Activated CD4-positive, alpha-beta T cell treated with anti-CD3 and anti-CD28 coated beads for 36 hours (primary cell): ENCODE measurements at regions of chr4 and their contacts with region 1.

Region 1: GRCh38 chr4:169757575-169758184 is at the start of gene HPF1:
- DNase-seq: peak; percentile 97
- ATAC-seq: peak; percentile 94
- H3K4me3 Mint-ChIP-seq: peak within 1 kb of the TSS; percentile 82
- H3K27ac Mint-ChIP-seq: peak within 1 kb of the TSS; percentile 68
- H3K4me1 Mint-ChIP-seq: peaks cover 15% of the 10 kb centered on the region
- H3K27me3 Mint-ChIP-seq: peaks cover under 1% of the 10 kb centered on the region
- total RNA-seq, gene HPF1: 29.8 to 34.7 TPM

Region 2: GRCh38 chr4:168318266-168318895 is 1439.3 kb before region 1 on chr4 and contains the start of gene DDX60:
- CTCF ChIA-PET with region 1: no interaction called
- POLR2A ChIA-PET with region 1: no interaction called
- intact Hi-C with region 1: loop called in 1 of 2 experiments (anchors 10 kb)
- DNase-seq: peak; percentile 91
- ATAC-seq: peak; percentile 93
- H3K4me3 Mint-ChIP-seq: peak within 1 kb of the TSS; percentile 85
- H3K27ac Mint-ChIP-seq: peak within 1 kb of the TSS; percentile 92
- H3K4me1 Mint-ChIP-seq: peaks cover 44% of the 10 kb centered on the region
- H3K27me3 Mint-ChIP-seq: no peaks in the 10 kb centered on the region
- total RNA-seq, gene DDX60: 22.2 to 23.8 TPM

Region 3: GRCh38 chr4:169619959-169620879 is 137.5 kb before region 1 on chr4 and contains the start of gene CLCN3:
- CTCF ChIA-PET with region 1: no interaction called
- POLR2A ChIA-PET with region 1: interaction called, 3 read pairs
- intact Hi-C with region 1: loop called in 1 of 2 experiments (anchors 1 kb)
- DNase-seq: peak; percentile 93
- ATAC-seq: peak; percentile 72
- H3K4me3 Mint-ChIP-seq: peak within 1 kb of the TSS; percentile 93
- H3K27ac Mint-ChIP-seq: peak within 1 kb of the TSS; percentile 100
- H3K4me1 Mint-ChIP-seq: peaks cover 56% of the 10 kb centered on the region
- H3K27me3 Mint-ChIP-seq: no peaks in the 10 kb centered on the region
- total RNA-seq, gene CLCN3: 21.2 to 22.0 TPM

Region 4: DNA sequence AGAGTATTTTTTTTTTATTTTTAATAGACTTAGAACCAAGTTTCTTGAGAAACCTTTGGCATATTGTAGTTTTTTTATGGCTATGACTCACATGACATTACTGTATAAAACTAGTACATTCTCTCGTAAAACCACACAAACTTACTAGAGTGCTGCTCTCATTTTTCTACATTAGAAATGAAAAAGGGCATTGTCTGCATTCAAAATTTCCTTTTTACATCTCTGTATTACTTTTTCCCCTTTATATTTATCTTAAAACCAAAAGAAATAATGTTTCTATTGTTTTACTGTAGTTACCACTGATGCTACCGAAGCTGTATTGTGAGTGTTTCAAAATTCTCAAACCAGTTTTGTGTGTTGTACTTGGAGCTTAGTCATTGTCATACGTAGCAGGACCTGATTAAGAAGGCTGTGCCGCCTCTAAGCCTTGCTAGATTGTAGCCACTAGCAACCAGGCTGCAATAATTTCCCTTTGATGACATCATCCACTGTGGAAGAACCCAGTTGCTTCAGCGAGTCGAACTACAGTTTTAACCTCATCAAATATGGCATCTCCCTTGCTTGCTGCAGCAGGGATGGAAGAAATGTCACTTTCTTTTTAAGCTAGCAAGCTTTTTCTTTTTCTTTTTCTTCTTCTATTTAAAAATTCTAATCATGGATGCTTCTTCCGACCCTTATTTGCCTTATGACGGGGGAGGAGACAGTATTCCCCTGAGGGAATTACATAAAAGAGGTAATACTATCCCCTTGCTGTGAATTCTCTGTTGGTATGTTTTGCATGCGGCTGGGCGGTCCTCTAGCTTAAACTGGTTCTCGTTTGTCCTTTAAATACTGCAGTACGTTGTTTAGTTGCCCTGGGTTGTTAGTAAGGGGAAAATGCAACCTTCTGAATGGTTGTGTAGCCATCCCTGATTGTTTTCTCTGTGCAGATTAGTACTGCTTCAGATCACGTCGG is 97.7 kb before region 1 on chr4:
- CTCF ChIA-PET with region 1: no interaction called
- POLR2A ChIA-PET with region 1: no interaction called
- intact Hi-C with region 1: loop called (anchors 1 kb)
- DNase-seq: peak; percentile 83
- ATAC-seq: peak; percentile 99
- H3K4me3 Mint-ChIP-seq: peak overlapping the region; percentile 80
- H3K27ac Mint-ChIP-seq: peak overlapping the region; percentile 98
- H3K4me1 Mint-ChIP-seq: peaks cover 37% of the 10 kb centered on the region
- H3K27me3 Mint-ChIP-seq: no peaks in the 10 kb centered on the region

Region 5: GRCh38 chr4:170027181-170027829 is 269.6 kb after region 1 on chr4:
- CTCF ChIA-PET with region 1: no interaction called
- POLR2A ChIA-PET with region 1: no interaction called
- intact Hi-C with region 1: loop called (anchors 1 kb)
- DNase-seq: peak; percentile 94
- ATAC-seq: peak; percentile 77
- H3K4me3 Mint-ChIP-seq: peak overlapping the region; percentile 71
- H3K27ac Mint-ChIP-seq: peak overlapping the region; percentile 69
- H3K4me1 Mint-ChIP-seq: peaks cover 10% of the 10 kb centered on the region
- H3K27me3 Mint-ChIP-seq: peaks cover 15% of the 10 kb centered on the region